ENCODE measurements at regions of chr3 and their contacts with region 1.

Region 1: GRCh38 chr3:125055913-125056745 is at the start of gene HEG1:
- DNase-seq: peak; percentile 48 to 88 (median 73)
- ATAC-seq: peak; percentile 55
- H3K4me3 ChIP-seq: peak within 1 kb of the TSS; percentile 74
- H3K4me3 Mint-ChIP-seq: peak within 1 kb of the TSS; percentile 96
- H3K27ac ChIP-seq: peak within 1 kb of the TSS; percentile 74 to 86
- H3K27ac Mint-ChIP-seq: peak within 1 kb of the TSS; percentile 90
- H3K4me1 ChIP-seq: peaks cover 40% of the 10 kb centered on the region
- H3K4me1 Mint-ChIP-seq: peaks cover 45% of the 10 kb centered on the region
- H3K27me3 ChIP-seq: no peaks in the 10 kb centered on the region
- H3K27me3 Mint-ChIP-seq: peaks cover 5% of the 10 kb centered on the region
- CTCF ChIP-seq: no peak
- total RNA-seq, gene HEG1: 31.2 to 32.6 TPM

Region 2: DNA sequence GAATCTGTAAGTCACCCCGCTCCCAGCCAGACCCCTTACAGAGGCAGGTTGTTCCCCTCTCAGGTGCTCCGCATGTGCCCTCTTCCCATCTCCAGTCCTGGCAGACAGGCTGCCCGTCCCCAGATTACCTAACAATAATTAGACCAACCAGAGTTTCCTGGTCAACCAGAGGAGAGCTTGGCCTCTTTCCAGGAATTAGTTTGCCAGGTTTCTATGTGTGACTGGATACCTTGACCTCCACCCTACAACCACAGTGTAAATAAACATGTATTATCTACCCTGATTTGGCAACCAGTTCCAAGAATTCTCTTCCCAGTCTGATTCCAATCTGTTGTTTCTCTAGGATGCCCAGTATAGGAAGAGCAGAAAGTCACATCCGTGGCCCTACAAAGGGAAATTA is 503.9 kb before region 1 on chr3:
- CTCF ChIA-PET with region 1: no interaction called
- POLR2A ChIA-PET with region 1: no interaction called
- intact Hi-C with region 1: no loop called
- DNase-seq: no peak
- ATAC-seq: no peak
- H3K4me3 ChIP-seq: no peak overlapping the region
- H3K4me3 Mint-ChIP-seq: no peak overlapping the region
- H3K27ac ChIP-seq: no peak overlapping the region
- H3K27ac Mint-ChIP-seq: no peak overlapping the region
- H3K4me1 ChIP-seq: no peaks in the 10 kb centered on the region
- H3K4me1 Mint-ChIP-seq: peaks cover 6% of the 10 kb centered on the region
- H3K27me3 ChIP-seq: peaks cover 2 to 36% of the 10 kb centered on the region in 2 experiments
- H3K27me3 Mint-ChIP-seq: peaks cover 62% of the 10 kb centered on the region
- CTCF ChIP-seq: no peak

Region 3: GRCh38 chr3:125003369-125003853 is 52.7 kb before region 1 on chr3:
- CTCF ChIA-PET with region 1: no interaction called
- POLR2A ChIA-PET with region 1: interaction called, 31 read pairs
- intact Hi-C with region 1: loop called in 1 of 2 experiments (anchors 1 kb)
- DNase-seq: no peak
- ATAC-seq: no peak
- H3K4me3 ChIP-seq: no peak overlapping the region
- H3K4me3 Mint-ChIP-seq: no peak overlapping the region
- H3K27ac ChIP-seq: peak overlapping the region in 1 of 2 donors; percentile 61
- H3K27ac Mint-ChIP-seq: peak overlapping the region; percentile 94
- H3K4me1 ChIP-seq: peaks cover 29% of the 10 kb centered on the region
- H3K4me1 Mint-ChIP-seq: peaks cover 34% of the 10 kb centered on the region
- H3K27me3 ChIP-seq: no peaks in the 10 kb centered on the region
- H3K27me3 Mint-ChIP-seq: no peaks in the 10 kb centered on the region
- CTCF ChIP-seq: no peak

Region 4: DNA sequence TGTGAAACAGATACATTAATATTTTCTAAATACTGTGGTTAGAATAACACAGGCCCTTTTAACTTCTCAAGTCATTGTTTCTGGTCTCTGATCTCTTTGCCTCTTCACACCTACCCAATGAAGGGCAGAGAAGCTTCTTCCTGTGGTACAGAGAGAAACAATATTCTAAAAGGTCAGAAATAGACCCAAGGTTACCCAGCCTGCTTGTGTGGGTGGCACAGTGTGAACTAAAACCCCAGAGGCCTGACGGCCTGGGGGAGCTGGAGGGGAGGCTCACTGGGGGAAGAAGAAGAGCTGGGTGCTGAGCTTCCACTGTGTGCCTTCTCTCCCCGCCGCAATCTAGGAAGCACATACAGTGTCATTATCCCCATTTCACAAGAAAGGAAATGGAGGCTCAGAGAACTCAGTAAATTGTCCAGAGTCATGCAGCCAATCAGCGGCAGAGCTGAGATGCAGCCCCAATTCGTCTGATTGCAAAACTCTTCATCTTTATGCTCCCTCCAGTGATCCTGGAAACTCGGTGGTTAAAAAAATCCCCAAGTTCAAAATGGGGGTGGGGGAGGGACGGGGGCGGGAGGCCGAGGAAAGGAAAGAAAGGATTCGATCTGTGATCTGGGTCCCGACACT is 63.7 kb after region 1 on chr3:
- CTCF ChIA-PET with region 1: no interaction called
- POLR2A ChIA-PET with region 1: interaction called, 3 read pairs
- intact Hi-C with region 1: loop called in 1 of 2 experiments (anchors 5 kb)
- DNase-seq: peak in 1 of 14 experiments; percentile 54
- ATAC-seq: no peak
- H3K4me3 ChIP-seq: no peak overlapping the region
- H3K4me3 Mint-ChIP-seq: no peak overlapping the region
- H3K27ac ChIP-seq: peak overlapping the region in 1 of 2 donors; percentile 25
- H3K27ac Mint-ChIP-seq: peak overlapping the region; percentile 53
- H3K4me1 ChIP-seq: peaks cover 30% of the 10 kb centered on the region
- H3K4me1 Mint-ChIP-seq: peaks cover 29% of the 10 kb centered on the region
- H3K27me3 ChIP-seq: no peaks in the 10 kb centered on the region
- H3K27me3 Mint-ChIP-seq: no peaks in the 10 kb centered on the region
- CTCF ChIP-seq: no peak

Region 5: GRCh38 chr3:125519678-125520589 is 463.8 kb after region 1 on chr3 and contains the start of gene SNX4:
- CTCF ChIA-PET with region 1: no interaction called
- POLR2A ChIA-PET with region 1: no interaction called
- intact Hi-C with region 1: loop called in 1 of 2 experiments (anchors 10 kb)
- DNase-seq: peak; percentile 74 to 93 (median 84)
- ATAC-seq: peak; percentile 97
- H3K4me3 ChIP-seq: peak within 1 kb of the TSS; percentile 77
- H3K4me3 Mint-ChIP-seq: peak within 1 kb of the TSS; percentile 98
- H3K27ac ChIP-seq: peak within 1 kb of the TSS; percentile 23 to 51
- H3K27ac Mint-ChIP-seq: peak within 1 kb of the TSS; percentile 85
- H3K4me1 ChIP-seq: peaks cover 22% of the 10 kb centered on the region
- H3K4me1 Mint-ChIP-seq: peaks cover 39% of the 10 kb centered on the region
- H3K27me3 ChIP-seq: no peaks in the 10 kb centered on the region
- H3K27me3 Mint-ChIP-seq: no peaks in the 10 kb centered on the region
- CTCF ChIP-seq: no peak
- total RNA-seq, gene SNX4: 23.4 to 24.6 TPM